HepG2 (cell line): ENCODE measurements at regions of chrX and their contacts with region 1.

Region 1: DNA sequence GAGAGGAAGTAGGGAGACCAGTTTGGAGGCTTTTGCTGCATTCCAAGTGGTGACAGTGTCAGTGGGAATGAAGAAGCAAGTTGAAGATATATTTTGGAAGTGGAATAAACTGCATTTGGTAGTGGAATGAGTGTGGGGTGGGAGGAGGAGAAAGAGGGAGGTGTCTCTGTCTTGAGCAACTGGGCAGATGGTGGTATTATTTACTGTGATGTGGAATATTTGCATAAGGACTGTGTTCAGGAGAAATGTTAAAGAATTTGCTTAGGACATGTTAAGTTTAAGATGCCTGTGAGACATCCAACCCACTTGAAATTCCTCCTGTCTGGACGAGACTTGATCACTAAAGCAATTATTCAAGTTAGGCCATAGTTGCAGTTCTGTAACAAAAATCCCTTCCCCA is 448.9 kb upstream of the AMOT start:
- DNase-seq: no peak
- ATAC-seq: no peak
- H3K4me3 ChIP-seq: no peak overlapping the region
- H3K27ac ChIP-seq: no peak overlapping the region
- H3K4me1 ChIP-seq: no peaks in the 10 kb centered on the region
- H3K27me3 ChIP-seq: no peaks in the 10 kb centered on the region
- CTCF ChIP-seq: no peak
- EP300 ChIP-seq: no peak
- POLR2A ChIP-seq: no peak
- RAD21 ChIP-seq: no peak

Region 2: DNA sequence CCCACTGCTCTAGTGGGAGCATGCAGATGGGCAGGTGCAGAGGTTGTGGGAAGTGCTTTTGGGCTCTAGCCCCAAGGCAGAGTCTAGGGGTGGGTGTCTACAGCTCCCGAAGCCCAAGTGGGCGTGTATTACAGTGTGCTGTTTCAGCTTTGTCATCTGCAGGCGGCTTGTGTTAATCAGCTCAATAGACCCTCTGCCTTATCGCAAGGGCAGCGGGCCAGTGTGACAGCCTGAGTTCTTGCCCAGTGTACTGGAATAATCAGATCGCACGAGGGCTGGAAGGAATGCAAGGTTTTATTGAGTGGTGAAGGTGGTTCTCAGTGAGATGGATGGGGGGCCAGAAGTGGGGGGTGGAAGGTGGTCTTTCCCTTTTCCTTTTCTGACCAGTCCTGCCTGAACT is 80.5 kb after region 1 on chrX:
- CTCF ChIA-PET with region 1: no interaction called
- POLR2A ChIA-PET with region 1: no interaction called
- in situ Hi-C with region 1: no loop called
- intact Hi-C with region 1: loop called (anchors 2 kb)
- DNase-seq: no peak
- ATAC-seq: no peak
- H3K4me3 ChIP-seq: no peak overlapping the region
- H3K27ac ChIP-seq: no peak overlapping the region
- H3K4me1 ChIP-seq: no peaks in the 10 kb centered on the region
- H3K27me3 ChIP-seq: no peaks in the 10 kb centered on the region
- CTCF ChIP-seq: no peak
- EP300 ChIP-seq: no peak
- POLR2A ChIP-seq: no peak
- RAD21 ChIP-seq: no peak